Common myeloid progenitor, CD34-positive (primary cell): ENCODE measurements at regions of chr7 and their contacts with region 1.

Region 1: DNA sequence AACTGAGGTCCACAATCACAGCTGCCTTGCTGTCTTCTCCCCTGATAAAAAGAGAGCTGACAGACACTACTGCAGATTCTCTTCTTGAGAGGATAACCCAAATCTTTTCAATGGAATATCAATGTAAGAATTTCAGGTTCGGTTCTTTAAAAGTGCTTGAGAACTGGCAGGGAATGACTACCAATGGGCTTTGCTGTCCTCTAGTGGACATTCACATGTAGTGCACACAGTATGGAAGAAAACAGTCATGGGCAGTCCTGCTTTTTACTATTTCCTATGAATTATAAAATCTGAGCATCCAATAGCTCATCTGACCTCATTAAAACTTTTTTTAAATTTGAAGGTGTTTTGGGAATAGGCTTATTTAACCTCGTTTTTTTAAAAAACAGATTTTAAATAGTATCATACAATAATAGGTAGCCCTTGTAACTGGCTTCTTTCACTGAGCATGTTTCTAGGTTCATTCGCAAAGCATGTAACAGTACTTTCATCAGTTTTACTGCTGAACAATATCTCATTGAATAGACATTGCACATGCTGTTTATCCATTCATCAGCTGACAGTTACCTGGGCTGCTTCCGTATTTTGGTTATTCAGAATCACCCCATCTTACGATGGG is 18.3 kb downstream of the FZD9 start:
- DNase-seq: peak; percentile 66 to 82 (median 76)
- H3K4me3 ChIP-seq: no peak overlapping the region
- H3K27ac ChIP-seq: no peak overlapping the region
- H3K4me1 ChIP-seq: peaks cover 0 to 3% (median 0%) of the 10 kb centered on the region in 4 experiments
- H3K27me3 ChIP-seq: no peaks in the 10 kb centered on the region

Region 2: GRCh38 chr7:73316521-73316920 is 135.4 kb before region 1 on chr7:
- CTCF ChIA-PET with region 1: interaction called, 12 read pairs
- POLR2A ChIA-PET with region 1: no interaction called
- DNase-seq: no peak
- H3K4me3 ChIP-seq: no peak overlapping the region
- H3K27ac ChIP-seq: no peak overlapping the region
- H3K4me1 ChIP-seq: no peaks in the 10 kb centered on the region
- H3K27me3 ChIP-seq: no peaks in the 10 kb centered on the region

Region 3: DNA sequence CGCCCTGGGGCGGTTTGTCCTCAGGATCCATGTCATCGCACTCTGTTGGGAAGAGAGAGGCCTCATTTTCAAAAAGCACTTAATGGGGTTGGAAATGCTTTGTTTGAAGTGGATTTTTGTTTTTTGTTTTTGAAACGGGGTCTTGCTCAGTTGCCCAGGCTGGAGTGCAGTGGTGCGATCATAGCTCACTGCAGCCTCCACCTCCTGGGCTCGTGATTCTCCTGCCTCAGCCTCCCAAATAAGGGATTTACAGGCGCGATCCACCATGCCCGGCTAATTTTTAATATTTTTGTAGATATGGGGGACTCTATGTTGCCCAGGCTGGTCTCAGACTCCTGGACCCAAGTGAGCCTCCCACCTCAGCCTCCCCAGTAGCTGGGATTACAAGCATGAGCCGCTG is 123.2 kb before region 1 on chr7:
- CTCF ChIA-PET with region 1: interaction called, 14 read pairs
- POLR2A ChIA-PET with region 1: no interaction called
- DNase-seq: no peak
- H3K4me3 ChIP-seq: no peak overlapping the region
- H3K27ac ChIP-seq: no peak overlapping the region
- H3K4me1 ChIP-seq: peaks cover 0 to 14% (median 11%) of the 10 kb centered on the region in 4 experiments
- H3K27me3 ChIP-seq: no peaks in the 10 kb centered on the region

Region 4: GRCh38 chr7:73342645-73343044 is 109.2 kb before region 1 on chr7:
- CTCF ChIA-PET with region 1: interaction called, 13 read pairs
- POLR2A ChIA-PET with region 1: no interaction called
- DNase-seq: peak in 1 of 3 donors; percentile 7
- H3K4me3 ChIP-seq: no peak overlapping the region
- H3K27ac ChIP-seq: no peak overlapping the region
- H3K4me1 ChIP-seq: peaks cover 0 to 15% (median 2%) of the 10 kb centered on the region in 4 experiments
- H3K27me3 ChIP-seq: no peaks in the 10 kb centered on the region

Region 5: DNA sequence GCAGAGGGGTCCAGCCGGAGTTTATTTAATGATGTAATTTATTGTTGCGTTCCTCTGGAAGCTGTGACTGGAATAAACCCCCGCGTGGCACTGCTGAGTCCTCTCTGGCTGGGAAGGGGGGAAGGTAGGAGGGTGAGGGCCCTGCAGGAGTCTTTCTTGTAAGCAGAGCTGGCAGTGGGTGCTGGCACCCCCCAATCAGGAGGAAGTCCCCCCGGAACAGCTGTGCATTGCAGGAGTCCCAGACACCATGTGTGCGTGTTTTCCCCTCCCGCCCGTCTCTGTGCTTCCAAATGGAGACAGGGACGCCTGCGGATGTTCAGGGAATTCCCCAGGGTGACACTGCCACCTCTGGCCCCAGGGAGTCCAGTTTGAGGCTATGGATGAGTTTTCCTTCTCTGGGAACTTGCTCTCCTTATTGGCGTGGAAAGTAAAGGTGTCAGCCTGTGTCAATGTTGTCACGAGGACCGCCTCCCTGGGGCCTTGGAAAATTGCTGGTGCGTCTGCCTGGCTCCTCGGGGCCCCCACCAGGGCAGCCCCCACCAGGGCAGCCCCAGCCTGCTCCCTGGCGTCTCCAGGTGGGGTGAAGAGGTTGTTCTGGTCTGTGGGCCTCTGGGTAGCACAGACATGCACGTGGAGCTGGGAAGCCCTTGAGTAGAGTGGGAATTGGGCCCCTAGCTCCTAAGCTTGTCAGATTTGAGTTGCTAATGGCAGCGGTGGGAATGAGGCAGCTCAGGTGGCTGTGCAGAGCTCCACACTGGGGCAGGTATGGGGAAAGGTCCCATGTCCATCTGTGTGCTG is 15.7 kb before region 1 on chr7:
- CTCF ChIA-PET with region 1: interaction called, 15 read pairs
- POLR2A ChIA-PET with region 1: no interaction called
- DNase-seq: no peak
- H3K4me3 ChIP-seq: no peak overlapping the region
- H3K27ac ChIP-seq: no peak overlapping the region
- H3K4me1 ChIP-seq: peaks cover 0 to 6% (median 4%) of the 10 kb centered on the region in 4 experiments
- H3K27me3 ChIP-seq: peaks cover 0 to 16% (median 0%) of the 10 kb centered on the region in 5 experiments

Region 6: DNA sequence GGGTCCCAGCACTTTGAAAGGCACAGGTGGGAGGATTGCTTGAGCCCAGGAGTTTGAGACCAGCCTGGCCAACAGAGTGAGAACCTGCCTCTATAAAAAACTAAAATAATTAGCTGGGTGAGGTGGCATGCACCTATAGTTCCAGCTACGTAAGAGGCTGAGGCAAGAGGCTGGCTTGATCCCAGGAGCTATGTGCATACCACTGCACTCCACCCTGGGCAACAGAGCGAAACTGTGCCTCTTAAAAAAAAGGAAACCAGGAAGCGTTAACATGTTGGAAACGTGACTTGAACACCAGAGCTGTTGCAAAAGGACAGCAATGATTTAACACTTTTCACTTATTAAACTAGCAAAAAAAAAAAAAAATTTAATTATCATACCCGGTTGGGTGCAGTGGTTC is 57.6 kb after region 1 on chr7:
- CTCF ChIA-PET with region 1: no interaction called
- POLR2A ChIA-PET with region 1: no interaction called
- DNase-seq: no peak
- H3K4me3 ChIP-seq: no peak overlapping the region
- H3K27ac ChIP-seq: no peak overlapping the region
- H3K4me1 ChIP-seq: no peaks in the 10 kb centered on the region
- H3K27me3 ChIP-seq: no peaks in the 10 kb centered on the region

Region 7: GRCh38 chr7:73593207-73594045 is 141.5 kb after region 1 on chr7:
- CTCF ChIA-PET with region 1: no interaction called
- POLR2A ChIA-PET with region 1: no interaction called
- DNase-seq: no peak
- H3K4me3 ChIP-seq: no peak overlapping the region
- H3K27ac ChIP-seq: no peak overlapping the region
- H3K4me1 ChIP-seq: no peaks in the 10 kb centered on the region
- H3K27me3 ChIP-seq: peaks cover 0 to 52% (median 8%) of the 10 kb centered on the region in 5 experiments